ENCODE measurements at regions of chr22 and their contacts with region 1.

Region 1: GRCh38 chr22:40415531-40416266 is 45.3 kb downstream of the SGSM3 start:
- DNase-seq: peak in 3 of 10 donors; percentile 17 to 33 (median 23)
- ATAC-seq: peak; percentile 46 to 48
- H3K4me3 Mint-ChIP-seq: peak overlapping the region; percentile 19 to 86 (median 53)
- H3K27ac Mint-ChIP-seq: peak overlapping the region; percentile 88 to 96 (median 94)
- H3K4me1 Mint-ChIP-seq: peaks cover 33 to 63% (median 56%) of the 10 kb centered on the region in 4 donors
- H3K27me3 Mint-ChIP-seq: no peaks in the 10 kb centered on the region

Region 2: GRCh38 chr22:40243891-40244290 is 171.8 kb before region 1 on chr22:
- POLR2A ChIA-PET with region 1: no interaction called
- DNase-seq: peak in 4 of 10 donors; percentile 6 to 44 (median 38)
- ATAC-seq: no peak
- H3K4me3 Mint-ChIP-seq: peak overlapping the region in 9 of 10 donors; percentile 47 to 75 (median 63)
- H3K27ac Mint-ChIP-seq: peak overlapping the region in 8 of 10 donors; percentile 72 to 88 (median 83)
- H3K4me1 Mint-ChIP-seq: peaks cover 45 to 85% (median 79%) of the 10 kb centered on the region in 4 donors
- H3K27me3 Mint-ChIP-seq: no peaks in the 10 kb centered on the region

Region 3: GRCh38 chr22:40426594-40427333 is 11.1 kb after region 1 on chr22:
- POLR2A ChIA-PET with region 1: interaction called, 18 read pairs
- DNase-seq: peak in 1 of 10 donors; percentile 57
- ATAC-seq: no peak
- H3K4me3 Mint-ChIP-seq: no peak overlapping the region
- H3K27ac Mint-ChIP-seq: peak overlapping the region; percentile 23 to 92 (median 64)
- H3K4me1 Mint-ChIP-seq: peaks cover 27 to 58% (median 39%) of the 10 kb centered on the region in 4 donors
- H3K27me3 Mint-ChIP-seq: no peaks in the 10 kb centered on the region

Measured in naive thymus-derived CD8-positive, alpha-beta T cell (primary cell).